ENCODE measurements at regions of chr6 and their contacts with region 1.

Region 1: DNA sequence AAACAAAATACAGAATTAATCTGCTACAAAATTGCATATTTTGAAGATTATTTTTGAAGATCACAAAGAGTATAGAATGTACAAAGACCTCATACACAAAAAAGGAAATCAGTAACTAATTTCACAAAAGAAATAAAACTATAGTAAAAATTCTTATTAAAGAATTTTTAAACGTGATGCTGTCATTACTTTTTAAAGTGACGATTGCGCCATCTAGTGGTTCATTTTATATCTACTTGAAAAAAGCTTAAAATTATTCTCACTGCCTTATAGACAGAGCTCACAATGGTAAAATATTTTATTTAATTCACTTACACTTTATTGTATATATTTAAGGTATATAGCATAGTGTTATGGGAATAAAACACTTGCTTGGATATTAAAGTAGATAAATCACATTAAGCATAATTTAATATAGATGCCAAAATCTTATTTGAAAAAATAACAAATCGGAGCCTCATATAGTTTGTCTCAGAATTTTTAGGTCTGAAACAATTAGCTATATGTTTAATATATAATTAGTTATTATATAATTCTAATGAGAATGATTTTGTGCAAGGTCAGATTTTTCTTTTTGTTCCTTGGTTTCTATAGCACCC is 128.8 kb downstream of the PHF3 start:
- DNase-seq: no peak

Region 2: GRCh38 chr6:63352587-63353285 is 411.7 kb before region 1 on chr6:
- intact Hi-C with region 1: loop called (anchors 1 kb)
- DNase-seq: no peak

Region 3: GRCh38 chr6:63598049-63599036 is 166.1 kb before region 1 on chr6:
- intact Hi-C with region 1: loop called (anchors 1 kb)
- DNase-seq: peak; percentile 38 to 94 (median 74)

Region 4: GRCh38 chr6:63635588-63636517 is 128.6 kb before region 1 on chr6 and contains the start of gene PHF3:
- intact Hi-C with region 1: loop called (anchors 5 kb)
- DNase-seq: peak; percentile 84 to 98 (median 91)

Region 5: GRCh38 chr6:63685446-63686379 is 78.7 kb before region 1 on chr6:
- intact Hi-C with region 1: loop called (anchors 2 kb)
- DNase-seq: no peak